ENCODE measurements at regions of chr3 and their contacts with region 1.

Region 1: DNA sequence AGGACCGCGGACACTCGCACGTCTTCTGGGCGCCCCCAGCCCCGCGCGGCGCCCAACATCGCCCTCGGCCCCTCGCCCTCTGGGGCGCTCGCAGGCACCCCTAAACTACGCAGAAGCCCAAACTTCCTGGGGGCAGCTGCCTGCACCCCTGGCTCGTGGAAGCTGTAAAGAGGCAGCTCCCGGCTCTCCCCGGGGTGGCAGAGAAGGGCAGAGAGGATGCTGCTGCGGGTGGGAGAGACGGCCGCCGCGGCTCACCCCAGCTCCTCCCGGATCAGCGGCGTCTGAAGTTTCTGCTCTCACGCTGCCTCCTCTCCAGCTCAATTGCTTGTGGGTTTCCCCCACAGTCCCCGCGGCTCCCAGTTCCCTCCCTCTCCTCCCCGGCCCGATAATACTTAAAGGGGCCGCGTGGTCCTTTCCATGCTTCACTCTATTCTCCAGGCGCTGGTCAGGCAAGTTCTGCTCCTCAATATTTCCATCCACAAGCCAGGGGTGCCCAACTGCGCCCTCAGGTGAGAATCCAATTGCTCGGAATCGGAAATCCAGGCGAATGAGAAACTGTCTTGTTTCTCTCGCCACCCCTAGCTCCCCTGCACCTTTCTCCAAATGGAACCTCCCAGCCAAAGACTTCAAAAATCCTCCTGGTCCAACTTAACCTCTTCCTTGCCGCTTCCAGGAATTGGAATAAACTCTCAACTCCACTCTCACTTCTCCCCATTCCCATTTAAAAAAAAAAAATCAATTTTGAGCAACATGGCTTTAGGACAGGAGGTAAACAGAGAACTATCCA is 748.5 kb downstream of the ROBO1 start:
- DNase-seq: peak; percentile 84
- ATAC-seq: peak; percentile 89
- H3K4me3 ChIP-seq: peak overlapping the region; percentile 95 to 98 (median 95)
- H3K27ac ChIP-seq: peak overlapping the region; percentile 98
- H3K4me1 ChIP-seq: peaks cover 18% of the 10 kb centered on the region
- H3K27me3 ChIP-seq: no peaks in the 10 kb centered on the region; a peak in 1 of 5 replicates
- CTCF ChIP-seq: peak; percentile 53
- EP300 ChIP-seq: peak in 1 of 2 experiments; percentile 3; a peak in 1 of 4 replicates
- POLR2A ChIP-seq: peak; percentile 80 to 90
- RAD21 ChIP-seq: no peak

Region 2: GRCh38 chr3:78666470-78666800 is 352.9 kb before region 1 on chr3:
- CTCF ChIA-PET with region 1: no interaction called
- POLR2A ChIA-PET with region 1: interaction called, 4 read pairs
- in situ Hi-C with region 1: loop called (anchors 5 kb)
- intact Hi-C with region 1: no loop called
- DNase-seq: no peak
- ATAC-seq: no peak
- H3K4me3 ChIP-seq: no peak overlapping the region
- H3K27ac ChIP-seq: no peak overlapping the region
- H3K4me1 ChIP-seq: peaks cover 13% of the 10 kb centered on the region
- H3K27me3 ChIP-seq: no peaks in the 10 kb centered on the region
- CTCF ChIP-seq: no peak
- EP300 ChIP-seq: no peak
- POLR2A ChIP-seq: no peak
- RAD21 ChIP-seq: no peak

Region 3: GRCh38 chr3:79006077-79006476 is 13.3 kb before region 1 on chr3:
- CTCF ChIA-PET with region 1: no interaction called
- POLR2A ChIA-PET with region 1: interaction called, 13 read pairs
- in situ Hi-C with region 1: no loop called
- intact Hi-C with region 1: no loop called
- DNase-seq: no peak
- ATAC-seq: no peak; the same call in 2 of the 3 replicates
- H3K4me3 ChIP-seq: no peak overlapping the region
- H3K27ac ChIP-seq: peak overlapping the region; percentile 19
- H3K4me1 ChIP-seq: peaks cover 69% of the 10 kb centered on the region
- H3K27me3 ChIP-seq: no peaks in the 10 kb centered on the region
- CTCF ChIP-seq: no peak
- EP300 ChIP-seq: peak in 1 of 2 experiments; percentile 45; a peak in 1 of 4 replicates
- POLR2A ChIP-seq: no peak
- RAD21 ChIP-seq: no peak

Region 4: GRCh38 chr3:79906106-79906505 is 886.8 kb after region 1 on chr3:
- CTCF ChIA-PET with region 1: no interaction called
- POLR2A ChIA-PET with region 1: no interaction called
- in situ Hi-C with region 1: no loop called
- intact Hi-C with region 1: no loop called
- DNase-seq: no peak
- ATAC-seq: no peak
- H3K4me3 ChIP-seq: no peak overlapping the region
- H3K27ac ChIP-seq: no peak overlapping the region
- H3K4me1 ChIP-seq: no peaks in the 10 kb centered on the region
- H3K27me3 ChIP-seq: no peaks in the 10 kb centered on the region
- CTCF ChIP-seq: no peak
- EP300 ChIP-seq: no peak
- POLR2A ChIP-seq: no peak
- RAD21 ChIP-seq: no peak

Measured in HepG2 (cell line).